A673 (cell line): ENCODE measurements at regions of chr6 and their contacts with region 1.

Region 1: DNA sequence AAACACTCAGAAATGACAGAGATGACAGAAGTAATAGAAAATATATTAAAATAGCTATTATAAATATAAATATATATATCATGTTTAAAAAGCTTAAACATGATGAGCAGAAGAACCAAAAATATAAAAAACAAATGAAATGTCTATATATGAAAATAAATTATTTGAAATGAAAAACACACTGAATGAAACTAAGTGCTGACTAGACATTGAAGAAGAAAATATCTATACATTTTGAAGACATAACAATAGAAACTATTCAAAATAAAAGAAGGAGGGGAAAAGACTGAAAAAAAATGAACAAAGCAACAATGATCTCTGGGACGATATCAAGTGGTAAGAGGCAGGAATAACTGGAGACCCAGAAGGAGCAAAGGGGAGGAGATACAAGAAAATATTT is 76.8 kb downstream of the RNASET2 start:
- DNase-seq: no peak
- H3K4me3 ChIP-seq: no peak overlapping the region
- H3K27ac ChIP-seq: no peak overlapping the region
- H3K4me1 ChIP-seq: no peaks in the 10 kb centered on the region
- H3K27me3 ChIP-seq: peaks cover 58% of the 10 kb centered on the region
- CTCF ChIP-seq: no peak

Region 2: DNA sequence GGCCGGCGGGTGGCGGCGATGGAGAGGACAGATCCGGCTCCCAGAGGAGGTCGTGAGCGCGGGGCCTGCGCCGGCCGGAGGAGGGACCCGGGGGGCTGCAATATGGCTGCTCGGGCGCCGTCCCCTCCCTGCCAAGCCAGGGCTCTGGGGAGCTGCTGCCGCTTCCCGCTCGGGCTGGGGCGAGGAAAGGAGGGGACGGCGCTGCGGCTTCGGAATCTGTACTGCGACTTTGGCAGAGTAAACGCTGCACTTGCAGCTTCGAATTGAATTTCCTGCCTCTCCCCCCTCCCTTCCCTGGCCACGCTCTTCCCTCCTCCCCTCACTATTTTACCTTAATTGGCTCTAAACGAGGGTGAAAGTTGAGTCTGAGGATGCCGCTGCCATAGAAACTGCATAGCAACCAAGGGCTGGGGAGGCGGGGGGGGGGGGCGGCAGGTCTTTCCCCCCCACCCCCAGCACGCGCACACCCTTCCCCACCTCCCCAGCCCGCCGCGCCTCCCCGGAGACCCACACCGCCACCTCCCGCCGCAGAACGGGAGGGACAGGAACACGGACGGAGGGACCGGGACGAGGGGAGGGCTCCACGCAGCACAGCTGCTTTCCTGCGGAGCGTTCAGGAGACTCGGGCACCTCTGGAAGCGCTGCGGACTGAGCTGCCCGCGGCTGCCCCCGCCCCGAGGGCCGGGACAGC is 17.2 kb before region 1 on chr6:
- CTCF ChIA-PET with region 1: no interaction called
- POLR2A ChIA-PET with region 1: interaction called, 11 read pairs
- intact Hi-C with region 1: no loop called
- DNase-seq: peak; percentile 17
- H3K4me3 ChIP-seq: peak overlapping the region; percentile 20
- H3K27ac ChIP-seq: no peak overlapping the region
- H3K4me1 ChIP-seq: no peaks in the 10 kb centered on the region
- H3K27me3 ChIP-seq: peaks cover 75% of the 10 kb centered on the region
- CTCF ChIP-seq: no peak

Region 3: GRCh38 chr6:168150551-168151320 is 1271.1 kb after region 1 on chr6:
- CTCF ChIA-PET with region 1: no interaction called
- POLR2A ChIA-PET with region 1: no interaction called
- intact Hi-C with region 1: no loop called
- DNase-seq: peak; percentile 35
- H3K4me3 ChIP-seq: no peak overlapping the region
- H3K27ac ChIP-seq: no peak overlapping the region
- H3K4me1 ChIP-seq: peaks cover 32% of the 10 kb centered on the region
- H3K27me3 ChIP-seq: no peaks in the 10 kb centered on the region
- CTCF ChIP-seq: peak; percentile 65